ENCODE measurements at regions of chr11 and their contacts with region 1.

Region 1: GRCh38 chr11:35617687-35618496 is at the start of gene FJX1:
- DNase-seq: peak; percentile 87
- H3K4me3 Mint-ChIP-seq: peak within 1 kb of the TSS; percentile 82
- H3K27ac Mint-ChIP-seq: no peak within 1 kb of the TSS
- H3K4me1 Mint-ChIP-seq: peaks cover 28% of the 10 kb centered on the region
- H3K27me3 Mint-ChIP-seq: no peaks in the 10 kb centered on the region
- CTCF ChIP-seq: no peak
- total RNA-seq, gene FJX1: 33.3 and 53.7 TPM in 2 replicates

Region 2: GRCh38 chr11:35629914-35630313 is 12.0 kb after region 1 on chr11:
- CTCF ChIA-PET with region 1: interaction called, 10 read pairs
- POLR2A ChIA-PET with region 1: interaction called, 22 read pairs
- intact Hi-C with region 1: no loop called
- DNase-seq: peak; percentile 95
- H3K4me3 Mint-ChIP-seq: no peak overlapping the region
- H3K27ac Mint-ChIP-seq: peak overlapping the region; percentile 36
- H3K4me1 Mint-ChIP-seq: peaks cover 25% of the 10 kb centered on the region
- H3K27me3 Mint-ChIP-seq: no peaks in the 10 kb centered on the region
- CTCF ChIP-seq: no peak

Region 3: DNA sequence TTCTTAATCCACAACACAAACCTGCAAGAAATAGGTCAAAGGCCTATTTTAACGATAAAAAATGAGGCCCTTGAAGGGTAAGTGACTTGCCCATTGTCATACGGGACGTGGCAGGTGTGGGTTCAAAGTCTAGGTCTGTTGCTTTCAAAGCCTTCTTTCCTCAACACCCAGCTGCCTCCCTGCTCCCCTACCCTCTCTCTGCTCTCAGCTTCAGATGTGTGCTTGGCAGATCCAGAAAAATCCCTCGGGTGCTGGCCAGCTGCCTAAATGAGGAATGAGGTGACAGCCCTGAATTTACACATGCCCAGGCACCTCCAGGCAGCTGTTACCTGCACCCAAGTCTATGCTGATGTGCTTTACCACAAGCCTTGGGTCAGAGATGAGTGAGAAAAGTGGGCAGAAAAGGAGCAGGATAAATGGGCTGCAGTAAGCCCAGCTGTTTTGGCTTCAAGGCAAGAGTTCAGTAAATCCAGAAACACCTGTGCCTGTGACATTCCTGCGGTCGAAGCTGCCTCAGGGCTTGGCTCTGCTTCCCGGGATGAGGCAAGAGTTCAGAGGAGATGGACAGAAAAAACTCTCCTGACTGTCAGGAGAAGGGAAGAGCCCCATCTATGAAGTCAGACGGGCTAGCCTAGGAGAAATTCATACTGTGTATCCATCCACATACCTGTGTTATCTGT is 276.0 kb after region 1 on chr11:
- CTCF ChIA-PET with region 1: no interaction called
- POLR2A ChIA-PET with region 1: interaction called, 12 read pairs
- intact Hi-C with region 1: no loop called
- DNase-seq: peak; percentile 97
- H3K4me3 Mint-ChIP-seq: peak overlapping the region; percentile 31
- H3K27ac Mint-ChIP-seq: peak overlapping the region; percentile 33
- H3K4me1 Mint-ChIP-seq: peaks cover 33% of the 10 kb centered on the region
- H3K27me3 Mint-ChIP-seq: no peaks in the 10 kb centered on the region
- CTCF ChIP-seq: no peak

Region 4: GRCh38 chr11:36034551-36035331 is 416.8 kb after region 1 on chr11:
- CTCF ChIA-PET with region 1: interaction called, 6 read pairs
- POLR2A ChIA-PET with region 1: no interaction called
- intact Hi-C with region 1: loop called (anchors 5 kb)
- DNase-seq: peak; percentile 56
- H3K4me3 Mint-ChIP-seq: peak overlapping the region; percentile 26
- H3K27ac Mint-ChIP-seq: peak overlapping the region; percentile 77
- H3K4me1 Mint-ChIP-seq: peaks cover 43% of the 10 kb centered on the region
- H3K27me3 Mint-ChIP-seq: no peaks in the 10 kb centered on the region
- CTCF ChIP-seq: no peak

Region 5: GRCh38 chr11:36149538-36150242 is 531.8 kb after region 1 on chr11:
- CTCF ChIA-PET with region 1: interaction called, 4 read pairs
- POLR2A ChIA-PET with region 1: interaction called, 3 read pairs
- intact Hi-C with region 1: loop called (anchors 1 kb)
- DNase-seq: peak; percentile 100
- H3K4me3 Mint-ChIP-seq: peak overlapping the region; percentile 29
- H3K27ac Mint-ChIP-seq: peak overlapping the region; percentile 82
- H3K4me1 Mint-ChIP-seq: peaks cover 42% of the 10 kb centered on the region
- H3K27me3 Mint-ChIP-seq: no peaks in the 10 kb centered on the region
- CTCF ChIP-seq: peak; percentile 80

Region 6: GRCh38 chr11:36492724-36493304 is 874.9 kb after region 1 on chr11:
- CTCF ChIA-PET with region 1: no interaction called
- POLR2A ChIA-PET with region 1: no interaction called
- intact Hi-C with region 1: loop called (anchors 5 kb)
- DNase-seq: peak; percentile 61
- H3K4me3 Mint-ChIP-seq: no peak overlapping the region
- H3K27ac Mint-ChIP-seq: no peak overlapping the region
- H3K4me1 Mint-ChIP-seq: no peaks in the 10 kb centered on the region
- H3K27me3 Mint-ChIP-seq: no peaks in the 10 kb centered on the region
- CTCF ChIP-seq: peak; percentile 80